Posterior vena cava (tissue), 2 donors: ENCODE measurements at regions of chr16 and their contacts with region 1.

Region 1: GRCh38 chr16:85717393-85718121 is 28.8 kb upstream of the GINS2 start:
- DNase-seq: peak; percentile 87

Region 2: DNA sequence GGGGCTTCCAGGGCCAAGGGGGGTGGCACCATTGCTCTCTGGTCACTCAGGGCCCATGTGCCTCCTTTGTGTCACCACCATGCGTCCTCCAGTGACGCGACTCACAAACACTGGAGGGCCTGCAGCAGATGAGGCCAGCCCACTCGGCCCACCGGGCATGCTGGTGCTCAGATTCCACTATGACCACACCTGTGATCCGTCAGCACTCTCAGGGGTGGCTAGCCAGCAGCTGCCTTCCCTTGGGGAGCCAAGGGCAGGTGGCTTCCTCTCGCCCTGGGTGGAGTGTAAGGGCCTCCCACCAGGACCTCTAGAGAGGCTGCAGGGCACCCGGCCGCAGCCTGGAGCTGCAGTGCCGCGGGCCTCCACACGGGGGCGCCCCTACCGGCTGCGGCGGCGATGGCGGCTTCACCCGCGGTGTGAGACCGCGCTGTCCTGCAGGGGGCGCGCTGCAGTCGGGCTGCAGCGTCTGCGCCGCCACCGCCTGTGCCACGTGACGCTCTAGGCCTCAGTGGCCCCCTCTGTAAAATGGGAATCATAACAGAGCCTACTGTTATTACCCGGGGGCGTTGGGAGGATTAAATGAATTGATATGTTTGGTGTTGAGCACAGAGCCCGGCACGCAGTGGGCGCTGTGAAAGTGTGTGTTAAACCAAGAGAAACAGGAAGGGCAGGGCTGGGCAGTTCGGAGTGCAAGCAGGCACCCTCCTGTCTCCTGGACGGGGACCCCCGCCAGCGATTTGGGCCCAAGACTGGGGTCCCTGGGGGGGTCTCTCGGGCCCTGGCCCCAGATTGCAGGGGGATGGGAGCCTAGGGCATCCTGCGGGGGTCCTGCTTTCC is 296.8 kb before region 1 on chr16:
- intact Hi-C with region 1: loop called in 1 of 2 experiments (anchors 10 kb)
- DNase-seq: peak; percentile 86